Sigmoid colon (tissue), 7 donors: ENCODE measurements at regions of chr2 and their contacts with region 1.

Region 1: DNA sequence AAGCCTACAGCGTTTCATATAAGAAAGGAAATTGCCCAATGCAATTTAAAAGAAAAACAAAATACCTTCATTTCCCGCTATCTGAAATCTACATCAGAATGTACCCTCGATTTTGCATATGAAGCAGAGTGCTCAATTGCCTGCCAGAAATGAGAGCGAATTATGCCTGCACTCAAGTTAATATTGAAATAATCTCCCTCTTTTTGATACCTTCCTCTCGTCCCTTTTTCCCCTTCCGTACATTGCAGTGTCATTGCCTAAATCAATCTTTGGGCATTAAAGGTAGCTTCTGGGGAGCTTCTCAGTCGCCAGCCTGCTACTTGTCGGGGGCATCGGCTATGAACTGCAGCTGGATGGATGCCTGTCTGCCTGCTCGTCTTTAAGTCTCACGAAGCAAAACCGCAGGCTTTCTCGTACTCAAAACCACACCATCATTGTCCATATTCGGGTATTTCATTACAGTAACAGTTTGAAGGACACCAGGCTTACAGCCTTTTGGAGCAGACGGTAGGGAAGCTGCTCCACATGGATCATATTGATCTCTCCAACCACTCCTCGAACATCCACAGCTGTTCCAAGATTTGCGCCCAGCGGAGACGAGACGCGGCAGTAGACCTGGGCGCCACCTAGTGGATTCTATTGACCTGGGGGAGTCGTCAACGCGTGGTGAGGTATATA is 64.0 kb upstream of the HNRNPA3 start:
- DNase-seq: peak; percentile 84
- H3K4me3 ChIP-seq: peak overlapping the region; percentile 21 to 43 (median 35)
- H3K27ac ChIP-seq: no peak overlapping the region
- H3K4me1 ChIP-seq: peaks cover 0 to 13% (median 5%) of the 10 kb centered on the region in 4 donors
- H3K27me3 ChIP-seq: peaks cover 0 to 6% (median 0%) of the 10 kb centered on the region in 3 donors
- CTCF ChIP-seq: peak; percentile 54 to 84 (median 66)
- EP300 ChIP-seq: no peak
- POLR2A ChIP-seq: no peak

Region 2: GRCh38 chr2:176454893-176455811 is 693.5 kb before region 1 on chr2:
- intact Hi-C with region 1: loop called (anchors 5 kb)
- DNase-seq: peak; percentile 92
- H3K4me3 ChIP-seq: no peak overlapping the region
- H3K27ac ChIP-seq: peak overlapping the region; percentile 36 to 59 (median 53)
- H3K4me1 ChIP-seq: peaks cover 0 to 12% (median 0%) of the 10 kb centered on the region in 4 donors
- H3K27me3 ChIP-seq: no peaks in the 10 kb centered on the region
- CTCF ChIP-seq: peak; percentile 48 to 93 (median 82)
- EP300 ChIP-seq: no peak
- POLR2A ChIP-seq: no peak

Region 3: GRCh38 chr2:176638167-176639015 is 510.2 kb before region 1 on chr2:
- intact Hi-C with region 1: loop called (anchors 1 kb)
- DNase-seq: peak; percentile 86
- H3K4me3 ChIP-seq: peak overlapping the region; percentile 52 to 74 (median 65)
- H3K27ac ChIP-seq: peak overlapping the region; percentile 65 to 80 (median 72)
- H3K4me1 ChIP-seq: peaks cover 0 to 11% (median 3%) of the 10 kb centered on the region in 4 donors
- H3K27me3 ChIP-seq: peaks cover 0 to 55% (median 11%) of the 10 kb centered on the region in 3 donors
- CTCF ChIP-seq: peak in 3 of 4 experiments; percentile 13 to 77 (median 33)
- EP300 ChIP-seq: no peak
- POLR2A ChIP-seq: no peak

Region 4: GRCh38 chr2:176814306-176815052 is 334.1 kb before region 1 on chr2:
- intact Hi-C with region 1: loop called (anchors 5 kb)
- DNase-seq: no peak
- H3K4me3 ChIP-seq: no peak overlapping the region
- H3K27ac ChIP-seq: no peak overlapping the region
- H3K4me1 ChIP-seq: peaks cover 0 to 6% (median 2%) of the 10 kb centered on the region in 4 donors
- H3K27me3 ChIP-seq: no peaks in the 10 kb centered on the region
- CTCF ChIP-seq: peak in 3 of 4 experiments; percentile 32 to 65 (median 34)
- EP300 ChIP-seq: no peak
- POLR2A ChIP-seq: no peak

Region 5: DNA sequence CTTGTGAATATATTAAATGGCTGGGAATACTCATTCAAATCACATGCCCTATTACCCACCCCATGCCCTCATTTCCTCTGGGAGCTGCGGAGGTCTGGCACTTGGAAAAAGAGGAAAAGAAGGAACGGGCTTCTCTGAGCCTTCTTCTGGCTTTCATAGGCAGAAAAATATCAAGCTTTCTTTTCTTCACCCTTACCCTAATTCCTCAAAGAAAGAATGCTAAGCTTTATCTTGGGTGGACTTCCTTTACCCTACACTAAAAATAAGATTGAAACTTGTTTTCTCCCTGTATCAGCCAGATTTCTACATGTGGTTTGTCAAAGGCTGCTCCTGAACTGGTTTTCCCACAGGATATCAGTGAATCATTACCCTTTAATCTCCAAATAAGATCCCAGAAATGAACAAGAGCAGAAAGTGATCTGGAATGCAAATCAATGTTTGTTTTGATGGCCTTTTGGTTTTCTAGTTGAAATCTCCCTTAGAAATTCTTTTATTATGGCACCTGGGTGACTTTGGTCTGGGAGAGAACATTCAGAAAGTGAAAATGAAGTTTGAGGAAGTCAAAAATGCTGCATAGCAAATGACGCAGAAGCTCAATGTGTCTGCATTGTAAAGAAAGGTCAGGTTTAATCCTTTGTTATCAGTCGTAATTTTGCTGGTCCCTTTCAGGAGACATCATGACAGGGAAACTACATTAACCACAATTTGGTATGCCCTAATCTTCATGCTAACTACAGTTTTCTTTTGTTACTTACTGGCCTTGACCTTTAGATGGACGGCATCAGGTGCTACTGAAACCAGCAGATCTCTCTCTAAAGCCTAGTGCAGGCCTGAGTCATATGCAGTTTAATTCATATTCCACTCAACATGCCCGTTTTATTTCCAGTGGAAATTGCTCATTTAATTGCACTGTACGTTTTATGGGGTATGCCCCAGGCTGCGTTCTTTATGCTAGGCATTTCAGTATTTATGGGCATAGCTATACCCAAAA is 17.4 kb after region 1 on chr2:
- intact Hi-C with region 1: no loop called
- DNase-seq: no peak
- H3K4me3 ChIP-seq: peak overlapping the region; percentile 12 to 49 (median 45)
- H3K27ac ChIP-seq: peak overlapping the region; percentile 81 to 88 (median 86)
- H3K4me1 ChIP-seq: peaks cover 0 to 18% (median 12%) of the 10 kb centered on the region in 4 donors
- H3K27me3 ChIP-seq: no peaks in the 10 kb centered on the region
- CTCF ChIP-seq: no peak
- EP300 ChIP-seq: no peak
- POLR2A ChIP-seq: no peak